ENCODE measurements at regions of chr3 and their contacts with region 1.

Region 1: DNA sequence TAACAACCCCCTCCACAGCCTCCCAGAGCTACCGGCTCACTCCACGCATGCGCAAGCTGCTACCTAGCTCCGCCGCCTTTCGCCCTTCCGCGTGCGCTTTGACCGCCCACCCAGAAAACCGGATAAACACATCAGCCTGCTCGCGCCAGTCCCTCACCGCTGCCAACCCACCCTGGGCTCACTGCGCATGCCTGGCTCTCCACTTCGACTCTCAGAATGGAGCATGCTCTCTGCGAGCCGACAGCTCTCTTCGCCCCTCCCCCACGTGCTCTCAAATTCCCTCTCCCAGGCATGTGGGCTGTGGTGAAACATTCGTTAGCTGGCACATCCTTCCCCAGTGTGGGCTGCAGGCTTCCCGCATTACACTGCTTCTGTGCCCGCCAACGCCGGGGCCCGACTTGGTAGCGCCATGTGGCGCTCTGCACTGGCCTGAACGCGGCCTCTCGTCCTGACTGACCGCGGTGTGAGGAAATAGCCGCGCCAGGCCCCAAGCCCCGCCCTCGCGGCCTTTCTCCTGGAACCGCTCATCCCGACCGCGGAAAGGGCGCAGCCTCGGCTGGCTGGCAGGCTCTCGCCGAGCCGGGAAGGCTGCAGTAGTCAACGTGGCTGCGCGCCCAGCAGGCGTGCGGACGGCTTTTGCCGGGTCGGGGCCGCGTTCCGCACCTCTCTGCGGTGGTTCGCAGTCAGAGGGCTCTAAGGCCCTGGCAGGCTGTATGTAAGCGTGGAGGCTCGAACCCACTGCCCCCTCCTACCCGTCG is 445 bp upstream of the MSL2 start:
- DNase-seq: peak; percentile 100
- H3K4me3 ChIP-seq: peak overlapping the region; percentile 36 to 76 (median 48)
- H3K27ac ChIP-seq: peak overlapping the region; percentile 93
- H3K4me1 ChIP-seq: peaks cover 14% of the 10 kb centered on the region
- H3K27me3 ChIP-seq: no peaks in the 10 kb centered on the region
- CTCF ChIP-seq: no peak
- POLR2A ChIP-seq: peak; percentile 79

Region 2: DNA sequence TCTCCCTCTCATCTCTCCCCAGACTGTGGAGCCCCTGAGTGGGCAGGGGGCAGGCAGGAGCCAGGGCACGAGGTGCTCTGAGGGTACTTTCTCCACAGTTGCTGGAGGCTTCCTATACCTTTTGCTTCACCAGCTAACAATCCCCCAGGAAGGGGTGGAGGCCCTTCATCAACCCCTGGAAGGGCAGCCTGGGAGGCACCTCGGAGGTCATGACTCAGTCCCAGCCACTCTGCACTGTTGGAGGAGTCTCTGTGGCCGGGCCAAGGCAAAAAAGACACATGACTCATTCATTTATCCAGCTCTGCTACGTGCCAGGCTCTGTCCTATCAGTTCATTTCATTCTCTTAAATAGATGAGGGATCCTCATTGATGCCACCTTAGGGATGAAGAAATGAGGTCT is 1530.1 kb before region 1 on chr3:
- CTCF ChIA-PET with region 1: no interaction called
- POLR2A ChIA-PET with region 1: no interaction called
- dilution Hi-C with region 1: no loop called
- intact Hi-C with region 1: no loop called
- DNase-seq: no peak
- H3K4me3 ChIP-seq: no peak overlapping the region
- H3K27ac ChIP-seq: no peak overlapping the region
- H3K4me1 ChIP-seq: no peaks in the 10 kb centered on the region
- H3K27me3 ChIP-seq: no peaks in the 10 kb centered on the region
- CTCF ChIP-seq: no peak
- POLR2A ChIP-seq: no peak

Region 3: DNA sequence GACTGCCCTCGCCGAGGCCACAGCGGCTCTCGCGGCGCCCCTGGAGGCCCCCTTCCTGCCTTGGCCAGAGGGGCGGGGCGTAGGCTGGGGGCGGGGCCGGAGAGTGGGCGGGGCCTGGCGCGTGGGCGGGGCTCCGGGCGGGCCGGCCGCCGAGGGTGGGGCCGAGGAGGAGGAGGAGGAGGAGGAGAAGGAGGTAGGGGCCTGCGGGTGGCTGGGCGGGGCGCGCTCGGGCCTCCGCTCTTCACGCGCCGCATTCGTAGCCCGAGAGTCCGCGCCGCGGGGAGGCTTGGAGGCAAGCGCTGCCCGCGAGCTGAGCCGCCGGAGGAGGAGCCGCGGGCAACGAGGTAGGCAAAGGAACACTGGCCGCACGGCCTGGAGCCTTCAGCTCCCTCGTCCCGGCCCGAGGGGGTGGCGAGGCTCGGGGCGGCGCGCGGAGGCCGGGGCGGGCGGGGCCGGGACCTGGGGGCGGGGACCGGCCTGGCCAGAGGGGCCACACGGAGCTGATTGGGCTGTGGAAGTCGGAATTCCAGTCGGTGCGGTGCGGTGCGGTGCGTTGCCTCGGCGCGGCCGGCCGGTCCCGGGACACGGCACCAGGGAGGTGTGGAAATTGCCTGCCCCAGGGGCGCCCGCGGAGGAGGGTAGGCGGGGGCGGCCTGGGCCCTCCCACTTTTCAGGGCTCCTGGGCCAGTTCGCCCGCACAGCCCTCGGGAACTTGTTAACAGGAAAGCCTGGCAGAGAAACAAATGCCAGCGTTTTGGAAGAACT is 230.9 kb before region 1 on chr3 and contains the start of gene PPP2R3A:
- CTCF ChIA-PET with region 1: no interaction called
- POLR2A ChIA-PET with region 1: no interaction called
- dilution Hi-C with region 1: no loop called
- intact Hi-C with region 1: loop called (anchors 1 kb)
- DNase-seq: peak; percentile 88
- H3K4me3 ChIP-seq: peak within 1 kb of the TSS; percentile 61 to 95 (median 92)
- H3K27ac ChIP-seq: peak within 1 kb of the TSS; percentile 63
- H3K4me1 ChIP-seq: peaks cover 10% of the 10 kb centered on the region
- H3K27me3 ChIP-seq: peaks cover 5 to 6% of the 10 kb centered on the region in 2 experiments
- CTCF ChIP-seq: no peak
- POLR2A ChIP-seq: peak; percentile 37
- total RNA-seq, gene PPP2R3A: 13.8 and 14.6 TPM in 2 replicates

Region 4: DNA sequence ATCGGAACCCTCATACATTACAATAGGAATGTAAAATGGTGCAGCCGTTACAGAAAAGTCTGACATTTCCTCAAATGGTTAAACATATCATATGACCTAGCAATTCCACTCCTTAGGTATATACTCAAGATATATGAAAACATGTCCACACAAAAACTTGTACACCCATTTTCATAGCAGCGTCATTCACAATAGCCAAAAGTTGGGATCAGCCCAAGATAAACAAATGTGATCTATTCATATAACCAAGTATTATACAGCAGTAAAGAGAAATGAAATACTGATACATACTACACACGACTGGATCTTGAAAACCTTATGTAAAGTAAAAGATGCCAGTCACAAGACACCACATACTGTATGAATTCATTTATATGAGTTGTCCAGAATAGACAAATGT is 102.8 kb before region 1 on chr3:
- CTCF ChIA-PET with region 1: no interaction called
- POLR2A ChIA-PET with region 1: no interaction called
- dilution Hi-C with region 1: no loop called
- intact Hi-C with region 1: loop called (anchors 5 kb)
- DNase-seq: peak; percentile 56
- H3K4me3 ChIP-seq: no peak overlapping the region
- H3K27ac ChIP-seq: no peak overlapping the region
- H3K4me1 ChIP-seq: no peaks in the 10 kb centered on the region
- H3K27me3 ChIP-seq: no peaks in the 10 kb centered on the region
- CTCF ChIP-seq: no peak
- POLR2A ChIP-seq: no peak

Region 5: DNA sequence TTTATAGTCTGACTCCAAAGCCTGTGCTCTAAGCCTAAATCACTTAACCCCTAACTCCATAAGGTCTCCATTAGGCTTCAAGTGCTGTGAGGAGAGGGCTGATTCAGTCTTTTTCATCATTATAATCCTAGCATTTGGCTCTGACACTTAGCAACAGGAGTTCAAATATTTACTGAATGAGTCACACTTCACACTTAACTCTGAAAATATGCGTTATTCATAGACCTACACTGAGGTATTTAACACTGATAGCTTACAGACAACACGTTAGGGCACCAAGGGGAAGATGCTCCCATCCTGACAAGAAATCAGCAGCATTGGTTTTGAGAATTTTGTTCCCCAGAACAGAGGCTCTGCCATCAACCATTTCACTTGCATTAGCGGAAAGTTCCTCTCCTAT is 54.0 kb before region 1 on chr3:
- CTCF ChIA-PET with region 1: interaction called, 3 read pairs
- POLR2A ChIA-PET with region 1: interaction called, 4 read pairs
- dilution Hi-C with region 1: no loop called
- intact Hi-C with region 1: loop called (anchors 1 kb)
- DNase-seq: peak; percentile 87
- H3K4me3 ChIP-seq: no peak overlapping the region
- H3K27ac ChIP-seq: peak overlapping the region; percentile 81
- H3K4me1 ChIP-seq: peaks cover 18% of the 10 kb centered on the region
- H3K27me3 ChIP-seq: no peaks in the 10 kb centered on the region
- CTCF ChIP-seq: no peak
- POLR2A ChIP-seq: no peak

Region 6: GRCh38 chr3:136250226-136250902 is 53.8 kb after region 1 on chr3 and contains the start of gene PCCB:
- CTCF ChIA-PET with region 1: interaction called, 8 read pairs
- POLR2A ChIA-PET with region 1: interaction called, 3 read pairs
- dilution Hi-C with region 1: no loop called
- intact Hi-C with region 1: loop called (anchors 1 kb)
- DNase-seq: peak; percentile 96
- H3K4me3 ChIP-seq: peak within 1 kb of the TSS; percentile 31 to 73 (median 60)
- H3K27ac ChIP-seq: peak within 1 kb of the TSS; percentile 66
- H3K4me1 ChIP-seq: peaks cover 8% of the 10 kb centered on the region
- H3K27me3 ChIP-seq: no peaks in the 10 kb centered on the region
- CTCF ChIP-seq: peak; percentile 60 to 79
- POLR2A ChIP-seq: peak; percentile 81
- total RNA-seq, gene PCCB: 28.6 and 35.4 TPM in 2 replicates

Region 7: DNA sequence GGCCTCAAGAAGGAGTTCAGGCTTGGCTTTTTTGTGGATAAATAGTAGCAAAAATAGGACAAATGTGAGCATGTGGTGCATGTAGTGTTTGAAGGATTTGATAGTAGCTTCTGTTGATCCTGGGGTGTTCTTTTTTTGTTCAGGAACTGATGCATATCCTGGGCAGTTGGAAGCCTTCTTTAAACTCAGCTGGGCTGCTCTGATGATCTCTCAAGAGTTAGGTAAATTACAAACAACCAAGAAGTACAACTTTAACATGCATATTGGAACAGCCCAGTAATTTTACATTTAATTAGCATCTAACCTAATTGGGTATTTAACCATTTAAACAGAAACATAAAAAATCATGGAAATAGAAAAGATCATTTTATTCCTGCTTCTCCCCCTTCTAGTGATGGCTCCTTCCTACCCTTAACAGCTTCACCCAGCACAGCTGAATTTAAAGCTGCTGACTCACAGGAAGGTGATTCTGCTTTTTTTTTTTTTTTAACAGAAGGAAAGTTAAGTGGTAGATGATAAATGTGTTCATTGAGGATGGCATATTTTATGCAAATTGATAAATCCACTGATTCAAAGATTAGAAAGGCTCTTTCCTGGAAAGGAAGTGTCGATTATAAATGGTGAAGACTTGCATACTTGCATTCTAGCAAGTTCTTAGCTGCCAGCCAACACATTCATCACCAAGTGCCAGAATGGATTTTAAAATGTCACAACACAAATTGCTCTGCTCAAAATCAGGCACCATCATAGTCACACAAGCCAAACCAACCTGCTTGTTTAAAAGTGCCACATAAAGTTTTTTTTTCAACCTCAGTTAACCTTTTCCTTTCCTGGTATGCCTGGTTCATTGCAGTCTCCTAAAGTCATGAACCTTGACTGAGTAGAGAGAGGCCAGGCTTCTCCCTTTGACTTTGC is 642.3 kb after region 1 on chr3:
- CTCF ChIA-PET with region 1: no interaction called
- POLR2A ChIA-PET with region 1: no interaction called
- dilution Hi-C with region 1: no loop called
- intact Hi-C with region 1: loop called (anchors 5 kb)
- DNase-seq: peak; percentile 88
- H3K4me3 ChIP-seq: peak overlapping the region in 1 of 3 experiments; percentile 33
- H3K27ac ChIP-seq: peak overlapping the region; percentile 86
- H3K4me1 ChIP-seq: peaks cover 54% of the 10 kb centered on the region
- H3K27me3 ChIP-seq: no peaks in the 10 kb centered on the region
- CTCF ChIP-seq: no peak
- POLR2A ChIP-seq: peak; percentile 25

Region 8: DNA sequence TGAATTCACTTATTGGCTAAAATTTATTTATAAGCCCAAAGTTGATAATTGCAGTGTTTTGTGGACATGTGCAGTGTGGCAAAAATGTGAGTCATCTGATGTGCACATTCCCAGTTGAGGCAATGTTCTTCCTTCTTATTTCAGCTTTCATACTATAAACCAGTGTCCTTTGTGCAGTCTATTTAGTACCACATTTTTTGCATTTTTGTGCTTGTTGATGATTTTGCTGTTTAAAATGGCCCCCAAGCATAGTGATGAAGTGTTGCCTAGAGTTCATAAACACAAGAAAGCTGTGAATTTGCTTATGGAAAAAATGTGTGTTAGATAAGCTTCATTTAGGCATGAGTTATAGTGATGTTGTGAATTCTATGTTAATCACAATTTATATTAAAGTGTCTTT is 741.8 kb after region 1 on chr3:
- CTCF ChIA-PET with region 1: no interaction called
- POLR2A ChIA-PET with region 1: no interaction called
- dilution Hi-C with region 1: no loop called
- intact Hi-C with region 1: no loop called
- DNase-seq: no peak
- H3K4me3 ChIP-seq: no peak overlapping the region
- H3K27ac ChIP-seq: peak overlapping the region; percentile 62
- H3K4me1 ChIP-seq: peaks cover 27% of the 10 kb centered on the region
- H3K27me3 ChIP-seq: no peaks in the 10 kb centered on the region
- CTCF ChIP-seq: no peak
- POLR2A ChIP-seq: no peak

Measured in endothelial cell of umbilical vein (primary cell).